T-cell (primary cell): ENCODE measurements at regions of chr18 and their contacts with region 1.

Region 1: GRCh38 chr18:45664824-45665763 is 49.8 kb downstream of the SLC14A2 start:
- DNase-seq: peak; percentile 21 to 85 (median 56)
- ATAC-seq: peak; percentile 71 to 74 (median 72)
- H3K4me3 ChIP-seq: no peak overlapping the region
- H3K4me3 Mint-ChIP-seq: peak overlapping the region; percentile 11 to 67 (median 32)
- H3K27ac ChIP-seq: peak overlapping the region; percentile 75
- H3K27ac Mint-ChIP-seq: peak overlapping the region; percentile 72 to 93
- H3K4me1 ChIP-seq: peaks cover 40 to 48% of the 10 kb centered on the region in 2 experiments
- H3K4me1 Mint-ChIP-seq: peaks cover 54 to 56% (median 54%) of the 10 kb centered on the region in 3 donors
- H3K27me3 ChIP-seq: no peaks in the 10 kb centered on the region
- H3K27me3 Mint-ChIP-seq: no peaks in the 10 kb centered on the region

Region 2: DNA sequence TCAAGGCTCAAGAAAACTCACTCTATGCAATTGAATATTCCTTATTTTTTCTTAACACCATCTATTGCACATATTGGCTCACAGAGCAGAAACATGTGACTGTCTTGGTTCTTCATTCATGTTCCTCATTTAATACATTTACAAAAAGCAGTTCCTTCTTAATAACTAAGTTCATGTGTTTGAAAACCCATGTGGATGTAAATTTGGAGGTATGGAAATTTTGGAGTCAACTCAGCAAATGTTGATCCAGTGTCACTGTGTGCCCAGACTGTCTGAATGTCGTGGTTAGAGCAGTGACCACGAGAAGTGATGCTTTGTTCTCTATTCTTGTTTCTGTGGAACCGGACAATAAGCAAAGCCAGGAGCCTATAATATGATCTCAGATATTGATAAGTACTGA is 685.3 kb before region 1 on chr18:
- CTCF ChIA-PET with region 1: no interaction called
- POLR2A ChIA-PET with region 1: no interaction called
- DNase-seq: no peak
- ATAC-seq: no peak
- H3K4me3 ChIP-seq: no peak overlapping the region
- H3K4me3 Mint-ChIP-seq: no peak overlapping the region
- H3K27ac ChIP-seq: no peak overlapping the region
- H3K27ac Mint-ChIP-seq: no peak overlapping the region
- H3K4me1 ChIP-seq: no peaks in the 10 kb centered on the region
- H3K4me1 Mint-ChIP-seq: no peaks in the 10 kb centered on the region
- H3K27me3 ChIP-seq: no peaks in the 10 kb centered on the region
- H3K27me3 Mint-ChIP-seq: no peaks in the 10 kb centered on the region

Region 3: GRCh38 chr18:45482286-45482685 is 182.8 kb before region 1 on chr18:
- CTCF ChIA-PET with region 1: no interaction called
- POLR2A ChIA-PET with region 1: no interaction called
- DNase-seq: no peak
- ATAC-seq: no peak
- H3K4me3 ChIP-seq: no peak overlapping the region
- H3K4me3 Mint-ChIP-seq: no peak overlapping the region
- H3K27ac ChIP-seq: no peak overlapping the region
- H3K27ac Mint-ChIP-seq: no peak overlapping the region
- H3K4me1 ChIP-seq: no peaks in the 10 kb centered on the region
- H3K4me1 Mint-ChIP-seq: no peaks in the 10 kb centered on the region
- H3K27me3 ChIP-seq: peaks cover 0 to 12% of the 10 kb centered on the region in 2 experiments
- H3K27me3 Mint-ChIP-seq: peaks cover 9 to 31% of the 10 kb centered on the region in 2 donors

Region 4: GRCh38 chr18:45690975-45691815 is 26.1 kb after region 1 on chr18:
- CTCF ChIA-PET with region 1: interaction called, 29 to 62 read pairs
- POLR2A ChIA-PET with region 1: interaction called in 1 of 2 experiments, 4 read pairs
- DNase-seq: peak; percentile 38 to 87 (median 69)
- ATAC-seq: no peak
- H3K4me3 ChIP-seq: no peak overlapping the region
- H3K4me3 Mint-ChIP-seq: peak overlapping the region in 1 of 3 donors; percentile 20
- H3K27ac ChIP-seq: no peak overlapping the region
- H3K27ac Mint-ChIP-seq: no peak overlapping the region
- H3K4me1 ChIP-seq: peaks cover 28 to 46% of the 10 kb centered on the region in 2 experiments
- H3K4me1 Mint-ChIP-seq: peaks cover 36 to 49% (median 49%) of the 10 kb centered on the region in 3 donors
- H3K27me3 ChIP-seq: peaks cover 0 to 3% of the 10 kb centered on the region in 2 experiments
- H3K27me3 Mint-ChIP-seq: no peaks in the 10 kb centered on the region

Region 5: DNA sequence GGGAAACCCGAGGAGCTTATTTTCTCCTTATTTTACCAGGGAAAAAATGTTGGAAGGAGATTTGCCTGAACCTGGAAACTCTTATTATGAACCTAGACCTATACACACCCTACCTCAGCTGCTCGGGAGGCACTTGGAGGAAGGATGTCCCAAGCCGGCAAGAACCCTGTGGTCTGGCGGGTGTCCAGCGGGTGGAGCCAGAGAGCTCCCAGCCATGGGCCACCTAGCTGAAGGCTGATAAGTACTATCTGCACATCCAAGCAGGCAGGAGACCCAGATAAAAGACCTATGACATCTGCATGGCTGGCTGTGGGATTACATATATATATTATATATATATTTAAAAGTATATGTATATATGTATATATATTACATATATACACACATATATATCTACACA is 57.8 kb after region 1 on chr18:
- CTCF ChIA-PET with region 1: interaction called, 3 to 18 read pairs
- POLR2A ChIA-PET with region 1: no interaction called
- DNase-seq: peak; percentile 18 to 64 (median 52)
- ATAC-seq: peak; percentile 58 to 77 (median 68)
- H3K4me3 ChIP-seq: no peak overlapping the region
- H3K4me3 Mint-ChIP-seq: no peak overlapping the region
- H3K27ac ChIP-seq: no peak overlapping the region
- H3K27ac Mint-ChIP-seq: no peak overlapping the region
- H3K4me1 ChIP-seq: no peaks in the 10 kb centered on the region
- H3K4me1 Mint-ChIP-seq: peaks cover 0 to 5% (median 0%) of the 10 kb centered on the region in 3 donors
- H3K27me3 ChIP-seq: no peaks in the 10 kb centered on the region
- H3K27me3 Mint-ChIP-seq: peaks cover 2 to 3% of the 10 kb centered on the region in 2 donors

Region 6: DNA sequence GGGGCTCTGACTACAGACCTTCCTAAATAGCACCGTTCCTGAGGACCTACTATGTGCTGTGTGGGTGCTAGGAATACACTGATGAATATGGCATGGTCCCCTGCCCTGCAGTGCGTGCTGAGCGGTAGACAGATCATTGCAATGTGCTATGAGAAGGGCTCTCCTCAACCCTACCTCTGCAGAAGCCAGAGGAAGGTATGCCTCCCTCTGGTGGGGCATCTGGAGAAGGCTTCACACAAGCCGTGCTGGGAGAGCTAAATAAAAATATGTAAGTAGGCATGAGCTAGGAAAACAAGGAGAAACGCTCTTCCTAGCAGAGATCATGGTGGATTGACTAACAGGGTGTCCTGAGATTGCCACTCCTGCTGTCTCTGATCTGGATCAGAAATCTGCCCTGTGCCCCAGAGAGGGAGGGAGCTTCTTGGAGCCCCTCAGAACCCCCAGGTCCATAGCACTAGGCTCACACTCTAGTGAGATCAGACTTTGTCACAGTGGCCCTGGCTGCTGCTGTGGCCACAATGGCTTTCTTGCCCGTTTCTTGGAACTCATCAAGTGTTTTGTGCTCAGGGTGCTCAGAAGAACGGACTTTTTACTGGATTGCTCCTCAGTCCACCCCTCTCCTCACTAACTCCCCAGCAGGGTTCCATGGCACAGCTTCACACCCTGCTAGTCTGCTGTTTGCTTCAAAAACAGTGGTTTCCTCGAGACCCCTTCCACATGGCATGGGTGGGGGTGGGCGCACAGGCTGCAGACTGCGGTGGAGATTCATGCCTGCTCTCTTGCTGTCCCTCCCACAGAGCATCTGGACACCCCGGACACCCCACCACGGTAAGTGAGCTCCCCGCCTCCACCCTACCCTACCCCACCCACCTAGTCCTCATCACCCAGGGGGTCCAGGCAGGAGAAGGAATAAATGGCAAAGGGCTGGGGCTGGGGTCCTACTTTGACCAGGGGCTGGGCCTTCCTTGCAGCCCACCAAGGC is 174.6 kb after region 1 on chr18:
- CTCF ChIA-PET with region 1: interaction called, 3 to 16 read pairs
- POLR2A ChIA-PET with region 1: no interaction called
- DNase-seq: peak in 20 of 35 experiments; percentile 14 to 50 (median 27)
- ATAC-seq: peak; percentile 44 to 79 (median 54)
- H3K4me3 ChIP-seq: no peak overlapping the region
- H3K4me3 Mint-ChIP-seq: peak overlapping the region in 1 of 3 donors; percentile 42
- H3K27ac ChIP-seq: no peak overlapping the region
- H3K27ac Mint-ChIP-seq: no peak overlapping the region
- H3K4me1 ChIP-seq: peaks cover 3 to 16% of the 10 kb centered on the region in 2 experiments
- H3K4me1 Mint-ChIP-seq: peaks cover 13 to 19% (median 19%) of the 10 kb centered on the region in 3 donors
- H3K27me3 ChIP-seq: peaks cover 0 to 36% of the 10 kb centered on the region in 2 experiments
- H3K27me3 Mint-ChIP-seq: peaks cover 33 to 41% of the 10 kb centered on the region in 2 donors

Region 7: GRCh38 chr18:45879681-45880655 is 214.9 kb after region 1 on chr18:
- CTCF ChIA-PET with region 1: interaction called, 85 to 173 read pairs
- POLR2A ChIA-PET with region 1: no interaction called
- DNase-seq: peak; percentile 26 to 81 (median 64)
- ATAC-seq: peak; percentile 92 to 96 (median 94)
- H3K4me3 ChIP-seq: no peak overlapping the region
- H3K4me3 Mint-ChIP-seq: no peak overlapping the region
- H3K27ac ChIP-seq: no peak overlapping the region
- H3K27ac Mint-ChIP-seq: peak overlapping the region in 1 of 2 donors; percentile 34
- H3K4me1 ChIP-seq: peaks cover 5 to 10% of the 10 kb centered on the region in 2 experiments
- H3K4me1 Mint-ChIP-seq: peaks cover 14 to 17% (median 16%) of the 10 kb centered on the region in 3 donors
- H3K27me3 ChIP-seq: no peaks in the 10 kb centered on the region
- H3K27me3 Mint-ChIP-seq: no peaks in the 10 kb centered on the region

Region 8: DNA sequence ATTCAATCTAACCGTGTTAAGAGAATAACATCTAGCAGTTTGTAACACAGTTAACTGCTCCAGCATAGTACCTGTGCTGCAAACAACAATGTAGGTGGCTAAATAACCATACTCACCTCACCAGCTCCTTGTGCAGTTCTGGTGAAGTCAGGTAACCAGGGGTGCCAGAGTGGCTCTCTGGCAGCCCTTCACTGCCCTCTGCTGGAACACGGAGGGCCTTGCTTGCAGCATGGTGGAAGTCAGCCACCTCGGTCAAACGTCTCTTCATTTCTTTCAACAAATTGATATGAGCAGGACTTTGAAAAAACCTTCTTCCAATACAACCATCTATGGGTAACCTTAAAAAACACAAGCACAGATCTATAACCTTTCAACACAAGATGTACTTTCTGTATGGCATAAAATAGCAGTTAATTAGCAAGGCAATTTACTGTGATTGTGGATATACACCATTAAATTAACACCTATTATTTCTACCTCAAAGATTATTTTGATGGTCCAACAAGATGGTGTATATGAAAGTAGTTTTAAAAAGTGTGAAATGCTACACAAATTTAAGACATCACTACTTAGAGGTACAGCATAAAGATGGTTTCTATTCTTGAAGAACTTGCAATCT is 245.4 kb after region 1 on chr18:
- CTCF ChIA-PET with region 1: interaction called, 5 to 9 read pairs
- POLR2A ChIA-PET with region 1: interaction called in 1 of 2 experiments, 15 read pairs
- DNase-seq: peak; percentile 22 to 72 (median 54)
- ATAC-seq: peak; percentile 58 to 82 (median 77)
- H3K4me3 ChIP-seq: no peak overlapping the region
- H3K4me3 Mint-ChIP-seq: no peak overlapping the region
- H3K27ac ChIP-seq: no peak overlapping the region
- H3K27ac Mint-ChIP-seq: no peak overlapping the region
- H3K4me1 ChIP-seq: no peaks in the 10 kb centered on the region
- H3K4me1 Mint-ChIP-seq: peaks cover 0 to 2% (median 0%) of the 10 kb centered on the region in 3 donors
- H3K27me3 ChIP-seq: no peaks in the 10 kb centered on the region
- H3K27me3 Mint-ChIP-seq: no peaks in the 10 kb centered on the region

Region 9: DNA sequence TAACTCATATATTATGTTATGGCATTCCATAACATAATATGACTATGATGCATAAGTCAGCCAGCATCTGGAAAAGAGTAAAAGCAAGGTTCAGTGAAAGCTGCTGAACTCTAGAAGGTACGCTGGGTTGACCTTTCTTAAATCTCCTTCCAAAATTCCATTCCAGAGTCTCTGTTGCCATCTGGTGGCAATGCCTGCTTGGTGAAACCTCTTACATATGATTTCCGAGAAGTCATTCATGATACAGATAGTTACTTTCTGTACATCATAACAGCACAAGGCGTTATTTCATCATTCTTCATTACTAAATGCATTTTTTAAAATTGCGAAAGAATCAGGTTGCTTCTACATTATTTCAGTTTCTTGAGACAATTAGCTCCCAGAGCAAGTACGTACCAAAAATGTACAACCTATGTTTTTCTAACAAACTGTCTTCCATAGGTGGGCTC is 309.0 kb after region 1 on chr18:
- CTCF ChIA-PET with region 1: interaction called, 4 to 11 read pairs
- POLR2A ChIA-PET with region 1: no interaction called
- DNase-seq: peak; percentile 12 to 81 (median 57)
- ATAC-seq: peak; percentile 75 to 80 (median 78)
- H3K4me3 ChIP-seq: no peak overlapping the region
- H3K4me3 Mint-ChIP-seq: no peak overlapping the region
- H3K27ac ChIP-seq: no peak overlapping the region
- H3K27ac Mint-ChIP-seq: peak overlapping the region; percentile 16 to 84
- H3K4me1 ChIP-seq: peaks cover 3 to 4% of the 10 kb centered on the region in 2 experiments
- H3K4me1 Mint-ChIP-seq: peaks cover 0 to 9% (median 6%) of the 10 kb centered on the region in 3 donors
- H3K27me3 ChIP-seq: no peaks in the 10 kb centered on the region
- H3K27me3 Mint-ChIP-seq: no peaks in the 10 kb centered on the region

Region 10: GRCh38 chr18:46031741-46032140 is 366.6 kb after region 1 on chr18:
- CTCF ChIA-PET with region 1: no interaction called
- POLR2A ChIA-PET with region 1: no interaction called
- DNase-seq: no peak
- ATAC-seq: no peak
- H3K4me3 ChIP-seq: no peak overlapping the region
- H3K4me3 Mint-ChIP-seq: no peak overlapping the region
- H3K27ac ChIP-seq: no peak overlapping the region
- H3K27ac Mint-ChIP-seq: no peak overlapping the region
- H3K4me1 ChIP-seq: peaks cover 2 to 10% of the 10 kb centered on the region in 2 experiments
- H3K4me1 Mint-ChIP-seq: peaks cover 12 to 13% (median 12%) of the 10 kb centered on the region in 3 donors
- H3K27me3 ChIP-seq: no peaks in the 10 kb centered on the region
- H3K27me3 Mint-ChIP-seq: peaks cover 0 to 5% of the 10 kb centered on the region in 2 donors